ENCODE measurements at regions of chrX and their contacts with region 1.

Region 1: DNA sequence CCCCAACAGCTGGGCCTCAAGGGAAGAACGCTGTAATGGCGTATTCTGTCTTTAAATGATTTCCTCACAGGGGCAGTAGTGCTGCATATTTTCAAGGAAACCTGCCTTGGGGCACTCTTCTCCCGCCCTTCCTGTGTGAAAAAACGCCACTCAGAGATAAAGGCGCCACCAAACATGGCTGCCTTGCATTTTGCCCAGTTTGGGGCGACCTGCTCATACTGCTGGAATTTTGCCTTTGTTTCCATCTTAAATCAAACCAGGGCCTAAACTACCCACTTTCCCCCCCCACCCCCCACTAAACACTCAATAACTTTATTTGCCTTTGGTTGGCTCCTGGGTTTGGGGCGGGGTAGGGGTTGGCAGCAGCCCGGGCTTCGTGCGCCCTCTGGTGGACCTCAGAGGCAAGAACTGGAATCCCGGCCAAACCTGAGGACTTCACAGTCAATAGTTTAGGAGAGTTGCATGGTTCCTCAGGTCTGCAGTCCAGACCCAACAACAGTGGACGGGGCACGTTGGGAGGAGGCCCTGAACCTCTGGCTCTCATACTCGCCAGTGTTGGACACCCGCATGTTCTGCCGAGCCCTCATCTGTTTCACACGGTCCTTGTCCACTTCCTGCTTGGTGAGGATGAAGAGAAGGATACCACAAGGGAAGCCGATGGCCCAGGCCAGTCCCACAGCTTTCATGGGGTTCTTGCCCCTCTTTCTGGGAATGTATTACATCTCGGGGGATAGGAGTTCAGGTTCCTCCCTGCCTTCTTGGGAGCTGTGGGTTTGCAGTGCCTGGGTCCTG is 220.1 kb upstream of the STK26 start:
- DNase-seq: no peak
- H3K4me3 Mint-ChIP-seq: no peak overlapping the region
- H3K27ac Mint-ChIP-seq: no peak overlapping the region
- H3K4me1 Mint-ChIP-seq: no peaks in the 10 kb centered on the region
- H3K27me3 Mint-ChIP-seq: no peaks in the 10 kb centered on the region

Region 2: DNA sequence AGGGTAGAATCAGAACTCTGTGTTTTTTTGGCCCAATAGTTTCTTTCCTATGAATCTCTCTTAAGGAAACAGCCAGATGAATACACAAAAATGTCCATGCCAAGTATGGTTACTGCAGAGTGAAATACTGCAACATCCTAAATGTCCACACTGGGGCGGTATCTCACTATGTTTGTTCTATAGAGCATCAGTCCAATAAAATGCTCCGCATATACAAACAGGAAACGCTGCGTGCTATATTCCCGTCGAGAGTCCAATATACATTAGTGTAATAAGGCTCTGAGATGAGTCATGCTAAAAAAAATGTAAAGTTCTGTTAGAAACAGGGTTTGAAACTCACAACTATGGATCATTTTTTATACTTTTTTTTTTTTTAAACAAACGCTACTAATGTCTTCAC is 827.1 kb before region 1 on chrX:
- intact Hi-C with region 1: loop called (anchors 2 kb)
- DNase-seq: no peak
- H3K4me3 Mint-ChIP-seq: no peak overlapping the region
- H3K27ac Mint-ChIP-seq: no peak overlapping the region
- H3K4me1 Mint-ChIP-seq: no peaks in the 10 kb centered on the region
- H3K27me3 Mint-ChIP-seq: peaks cover 4% of the 10 kb centered on the region

Region 3: DNA sequence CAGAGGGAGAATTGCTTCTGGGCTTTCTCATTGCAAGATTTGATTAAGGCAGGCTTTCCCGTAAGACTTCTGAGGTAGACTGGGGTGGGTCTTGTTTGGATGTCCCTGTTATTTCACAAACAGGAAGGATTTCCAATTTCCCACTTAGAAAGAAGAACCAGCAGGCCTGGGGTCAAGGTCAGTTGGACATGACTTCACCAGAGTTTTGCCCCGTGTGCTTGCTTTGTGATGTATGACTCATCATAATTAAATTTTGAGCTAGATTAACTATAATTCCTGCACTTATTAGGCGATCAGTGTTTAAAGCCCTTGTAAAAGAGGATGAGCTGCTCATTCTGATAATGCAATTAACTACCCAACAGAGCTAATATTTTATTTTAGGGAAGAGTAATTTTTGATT is 777.7 kb before region 1 on chrX:
- intact Hi-C with region 1: no loop called
- DNase-seq: no peak
- H3K4me3 Mint-ChIP-seq: no peak overlapping the region
- H3K27ac Mint-ChIP-seq: no peak overlapping the region
- H3K4me1 Mint-ChIP-seq: no peaks in the 10 kb centered on the region
- H3K27me3 Mint-ChIP-seq: no peaks in the 10 kb centered on the region